PC-9 (cell line): ENCODE measurements at regions of chr16 and their contacts with region 1.

Region 1: DNA sequence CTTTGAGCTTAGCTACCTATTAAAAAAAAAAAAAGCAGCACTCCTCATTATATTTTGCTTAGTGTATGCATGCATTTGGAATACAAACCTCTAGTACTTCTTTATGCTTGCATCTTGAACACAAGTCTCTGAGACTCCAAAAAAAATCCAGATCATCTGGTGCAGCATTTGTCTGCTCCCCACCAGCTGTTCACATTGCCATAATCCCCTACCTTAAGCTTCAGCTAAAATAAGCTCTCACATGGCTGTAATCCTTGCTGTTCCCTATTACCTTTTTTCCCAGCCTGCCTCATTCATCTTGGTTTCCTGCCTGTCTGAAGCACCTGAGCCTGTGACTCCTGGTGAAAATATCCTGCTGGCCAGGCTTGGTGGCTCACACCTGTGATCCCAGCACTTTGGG is 7.5 kb upstream of the NFATC2IP start:
- DNase-seq: no peak
- H3K4me3 ChIP-seq: no peak overlapping the region
- H3K27ac ChIP-seq: no peak overlapping the region
- H3K4me1 ChIP-seq: peaks cover 12% of the 10 kb centered on the region
- H3K27me3 ChIP-seq: no peaks in the 10 kb centered on the region
- CTCF ChIP-seq: no peak

Region 2: GRCh38 chr16:28317040-28317880 is 626.0 kb before region 1 on chr16:
- CTCF ChIA-PET with region 1: no interaction called
- POLR2A ChIA-PET with region 1: no interaction called
- intact Hi-C with region 1: loop called (anchors 5 kb)
- DNase-seq: peak; percentile 46 to 67
- H3K4me3 ChIP-seq: no peak overlapping the region
- H3K27ac ChIP-seq: no peak overlapping the region
- H3K4me1 ChIP-seq: no peaks in the 10 kb centered on the region
- H3K27me3 ChIP-seq: no peaks in the 10 kb centered on the region
- CTCF ChIP-seq: peak; percentile 98

Region 3: GRCh38 chr16:28846080-28846932 is 97.0 kb before region 1 on chr16 and contains the start of gene TUFM:
- CTCF ChIA-PET with region 1: interaction called, 4 read pairs
- POLR2A ChIA-PET with region 1: no interaction called
- intact Hi-C with region 1: loop called (anchors 1 kb)
- DNase-seq: peak; percentile 97 to 99
- H3K4me3 ChIP-seq: peak within 1 kb of the TSS; percentile 89
- H3K27ac ChIP-seq: peak within 1 kb of the TSS; percentile 35
- H3K4me1 ChIP-seq: peaks cover 8% of the 10 kb centered on the region
- H3K27me3 ChIP-seq: no peaks in the 10 kb centered on the region
- CTCF ChIP-seq: peak; percentile 69
- total RNA-seq, gene TUFM: 342 and 448 TPM in 2 replicates

Region 4: DNA sequence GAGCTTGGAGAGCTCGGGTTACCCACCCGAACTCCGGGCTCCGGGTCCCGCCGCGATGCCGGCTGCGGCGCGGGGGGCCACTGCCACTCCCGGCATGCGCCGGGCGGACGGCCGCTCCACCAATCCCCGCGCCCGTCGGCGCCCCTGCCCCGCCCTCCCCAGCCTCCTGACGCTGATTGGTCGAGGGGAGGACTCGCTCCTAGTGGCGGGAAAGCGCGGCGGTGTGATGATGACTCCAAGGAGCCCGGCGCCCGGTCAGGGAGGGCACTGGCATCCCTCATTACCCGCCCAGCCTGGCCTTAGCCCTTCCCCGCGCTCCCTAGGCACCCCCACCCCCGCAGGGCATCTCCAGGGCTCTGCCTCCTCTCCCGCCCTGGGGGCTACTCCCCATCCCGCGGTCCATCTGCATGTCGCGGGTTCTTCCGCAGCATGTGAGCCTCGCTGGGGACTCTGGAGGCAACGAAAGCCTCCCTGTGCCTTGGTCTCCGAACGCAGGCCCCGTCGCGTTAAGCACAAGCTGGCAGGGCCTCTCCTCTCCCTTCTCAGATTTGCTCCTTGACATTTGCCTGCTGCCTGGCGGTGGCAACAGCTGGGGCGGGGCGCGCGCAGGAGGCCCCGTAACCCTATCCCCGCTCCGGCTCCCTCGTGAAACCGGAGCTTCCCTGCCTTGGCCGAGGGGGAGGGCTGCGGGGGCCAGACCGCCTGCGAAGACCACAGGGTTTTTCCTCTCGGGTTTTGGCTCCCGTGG is 63.3 kb before region 1 on chr16:
- CTCF ChIA-PET with region 1: interaction called, 3 read pairs
- POLR2A ChIA-PET with region 1: no interaction called
- intact Hi-C with region 1: loop called (anchors 5 kb)
- DNase-seq: peak; percentile 69 to 84
- H3K4me3 ChIP-seq: peak overlapping the region; percentile 71
- H3K27ac ChIP-seq: no peak overlapping the region
- H3K4me1 ChIP-seq: peaks cover 6% of the 10 kb centered on the region; the same call in 1 of the 2 replicates
- H3K27me3 ChIP-seq: no peaks in the 10 kb centered on the region
- CTCF ChIP-seq: no peak

Region 5: DNA sequence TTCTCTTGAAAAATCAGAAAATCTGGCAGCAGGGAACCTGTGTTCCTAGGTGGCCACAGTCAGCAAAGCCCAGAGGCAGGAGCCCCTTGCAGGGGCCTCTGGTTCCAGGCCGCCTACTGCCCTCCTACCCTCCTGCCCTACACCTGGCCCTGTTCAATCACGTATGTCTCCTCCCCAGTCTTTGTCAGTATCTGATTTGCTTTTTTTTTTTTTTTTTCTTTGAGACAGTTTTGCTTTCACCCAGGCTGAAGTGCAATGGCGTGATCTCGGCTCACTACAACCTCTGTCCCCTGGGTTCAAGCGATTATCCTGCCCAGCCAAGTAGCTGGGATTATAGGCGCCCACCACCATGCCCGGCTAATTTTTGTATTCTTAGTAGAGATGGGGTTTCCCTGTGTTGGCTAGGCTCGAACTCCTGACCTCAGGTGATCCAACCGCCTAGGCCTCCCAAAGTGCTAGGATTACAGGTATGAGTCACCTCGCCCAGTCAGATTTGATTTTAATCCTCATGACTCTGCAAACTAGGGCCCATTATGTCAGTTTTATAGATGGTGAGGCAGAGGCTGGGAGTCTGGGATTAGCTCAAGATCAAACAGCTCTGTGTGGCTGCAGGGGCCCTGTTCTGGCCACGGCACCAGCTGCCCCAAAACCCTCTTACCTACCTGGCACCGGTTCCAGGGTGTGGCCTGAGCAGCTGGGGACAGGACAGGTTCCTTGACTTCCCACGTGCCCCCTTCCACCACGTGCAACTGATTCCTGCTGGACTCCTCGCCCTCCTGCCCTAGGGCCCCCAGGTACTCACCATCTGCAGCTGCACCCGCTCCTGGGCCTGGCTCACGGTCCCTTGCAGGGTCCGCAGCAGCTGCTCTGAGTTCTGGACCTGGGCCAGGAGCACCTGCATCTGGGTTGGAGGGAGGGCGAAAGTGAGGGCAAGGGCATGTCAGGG is 32.9 kb before region 1 on chr16:
- CTCF ChIA-PET with region 1: interaction called, 5 read pairs
- POLR2A ChIA-PET with region 1: no interaction called
- intact Hi-C with region 1: loop called (anchors 5 kb)
- DNase-seq: peak; percentile 59 to 84
- H3K4me3 ChIP-seq: no peak overlapping the region
- H3K27ac ChIP-seq: peak overlapping the region; percentile 72
- H3K4me1 ChIP-seq: peaks cover 15% of the 10 kb centered on the region
- H3K27me3 ChIP-seq: no peaks in the 10 kb centered on the region
- CTCF ChIP-seq: no peak